Activated CD8-positive, alpha-beta memory T cell treated with anti-CD3 and anti-CD28 coated beads, Interleukin-2, amount 10 ng/mL, durations not matched to agents 7 days and 5 days (primary cell): ENCODE measurements at regions of chrX and their contacts with region 1.

Region 1: GRCh38 chrX:136028251-136028984 is 43.2 kb downstream of the SLC9A6 start:
- DNase-seq: no peak
- ATAC-seq: peak; percentile 57
- H3K4me3 Mint-ChIP-seq: no peak overlapping the region
- H3K27ac Mint-ChIP-seq: no peak overlapping the region
- H3K4me1 Mint-ChIP-seq: no peaks in the 10 kb centered on the region
- H3K27me3 Mint-ChIP-seq: no peaks in the 10 kb centered on the region

Region 2: DNA sequence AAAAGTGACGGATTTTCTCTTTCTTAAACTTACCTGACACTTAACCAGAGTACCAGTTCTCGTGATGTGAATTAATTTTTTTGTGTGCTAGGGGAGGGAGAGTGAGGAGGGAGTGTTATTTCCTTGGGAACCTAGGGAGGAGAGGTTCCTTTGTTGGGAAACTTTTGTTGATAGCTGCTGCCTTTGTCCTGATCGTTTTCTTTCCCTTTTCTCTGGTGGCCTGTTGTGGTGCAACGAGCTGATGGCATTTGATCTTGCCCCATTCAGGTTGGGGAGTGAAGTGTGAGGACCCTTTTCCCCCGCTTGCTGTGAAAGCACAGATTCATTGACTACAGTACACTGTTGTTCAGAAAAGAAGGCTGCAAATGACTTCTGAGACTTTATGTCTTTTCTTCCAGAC is 16.6 kb after region 1 on chrX:
- CTCF ChIA-PET with region 1: no interaction called
- DNase-seq: no peak
- ATAC-seq: no peak
- H3K4me3 Mint-ChIP-seq: no peak overlapping the region
- H3K27ac Mint-ChIP-seq: no peak overlapping the region
- H3K4me1 Mint-ChIP-seq: no peaks in the 10 kb centered on the region
- H3K27me3 Mint-ChIP-seq: no peaks in the 10 kb centered on the region

Region 3: DNA sequence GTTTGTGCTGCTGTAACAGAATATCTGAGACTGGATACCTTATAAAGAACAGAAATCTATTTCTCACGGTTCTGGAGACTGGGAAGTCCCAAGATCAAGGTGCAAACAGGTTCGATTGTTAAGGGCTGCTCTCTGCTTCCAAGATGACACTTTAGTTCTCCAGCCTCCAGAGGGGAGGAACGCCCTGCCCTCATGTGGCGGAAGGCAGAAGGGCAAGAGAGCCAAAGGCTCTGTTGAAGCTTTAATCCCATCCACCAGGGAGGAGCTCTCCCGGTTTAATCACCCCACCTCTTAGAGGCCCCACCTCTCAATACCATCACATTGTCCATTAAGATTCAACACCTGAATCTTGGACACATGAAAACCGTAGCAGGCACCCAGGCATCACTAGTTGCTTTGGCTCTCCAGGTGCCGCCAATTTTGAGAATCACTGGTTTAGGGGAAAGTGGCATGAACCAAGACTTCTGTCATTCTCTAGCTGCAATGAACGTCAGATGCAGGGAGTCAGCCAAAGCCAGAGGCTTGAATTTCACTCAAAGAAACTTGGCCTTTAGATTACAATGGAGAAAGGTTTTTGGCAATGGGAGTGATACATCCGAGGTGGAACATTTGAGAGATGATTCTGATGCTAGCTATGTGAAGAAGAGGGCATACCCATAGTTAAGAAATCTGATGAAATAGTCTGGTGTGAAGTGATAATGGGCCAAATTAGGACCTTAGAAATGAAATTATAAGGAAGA is 134.6 kb after region 1 on chrX:
- CTCF ChIA-PET with region 1: interaction called, 29 read pairs
- DNase-seq: peak; percentile 63
- ATAC-seq: peak; percentile 58
- H3K4me3 Mint-ChIP-seq: no peak overlapping the region
- H3K27ac Mint-ChIP-seq: no peak overlapping the region
- H3K4me1 Mint-ChIP-seq: peaks cover 3% of the 10 kb centered on the region
- H3K27me3 Mint-ChIP-seq: no peaks in the 10 kb centered on the region

Region 4: GRCh38 chrX:136209016-136209738 is 180.8 kb after region 1 on chrX:
- CTCF ChIA-PET with region 1: interaction called, 11 read pairs
- DNase-seq: peak; percentile 41
- ATAC-seq: no peak
- H3K4me3 Mint-ChIP-seq: no peak overlapping the region
- H3K27ac Mint-ChIP-seq: no peak overlapping the region
- H3K4me1 Mint-ChIP-seq: peaks cover 8% of the 10 kb centered on the region
- H3K27me3 Mint-ChIP-seq: no peaks in the 10 kb centered on the region